GM12878 (cell line): ENCODE measurements at regions of chr6 and their contacts with region 1.

Region 1: GRCh38 chr6:38068854-38069590 is 249.5 kb downstream of the ZFAND3 start:
- DNase-seq: no peak
- ATAC-seq: no peak
- H3K4me3 ChIP-seq: no peak overlapping the region
- H3K27ac ChIP-seq: no peak overlapping the region
- H3K4me1 ChIP-seq: peaks cover 3% of the 10 kb centered on the region; the same call in 1 of the 2 replicates
- H3K27me3 ChIP-seq: no peaks in the 10 kb centered on the region
- CTCF ChIP-seq: no peak
- EP300 ChIP-seq: no peak
- POLR2A ChIP-seq: no peak
- RAD21 ChIP-seq: no peak

Region 2: DNA sequence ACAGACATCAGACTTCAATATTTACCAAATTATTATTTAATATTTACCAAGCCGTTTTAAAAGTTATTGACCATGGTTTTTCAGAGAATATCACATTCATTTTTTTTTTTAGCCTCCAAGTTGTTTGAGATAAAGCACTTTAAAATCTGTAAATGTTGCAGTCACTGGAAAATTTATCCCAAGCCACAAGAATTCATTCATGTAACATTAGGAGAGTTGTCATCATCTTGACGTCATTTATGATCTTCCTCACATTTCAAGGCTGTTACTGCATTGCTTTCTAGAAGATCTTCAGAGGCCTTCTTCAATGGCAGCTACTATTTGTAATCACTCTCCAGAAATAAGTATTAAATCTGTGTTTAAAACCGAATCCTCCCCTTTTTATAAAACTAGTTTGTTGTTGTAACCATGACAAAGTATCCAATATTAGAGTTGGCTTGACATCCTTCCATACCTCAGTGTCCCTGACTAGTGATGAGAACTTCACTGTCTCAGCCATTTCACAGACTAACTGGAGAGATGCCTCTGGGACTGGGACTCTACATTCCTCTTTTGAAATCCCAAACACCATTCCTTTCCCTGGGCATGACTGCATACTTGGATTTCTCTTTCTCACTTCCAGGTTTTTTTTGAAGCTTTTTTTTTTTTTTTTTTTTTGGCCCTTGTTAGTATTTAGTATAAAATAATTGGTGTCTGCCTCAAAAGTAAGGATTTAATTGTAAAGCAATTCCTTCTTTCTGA is 149.4 kb before region 1 on chr6:
- CTCF ChIA-PET with region 1: no interaction called
- POLR2A ChIA-PET with region 1: no interaction called
- RAD21 ChIA-PET with region 1: no interaction called
- SMC1A ChIA-PET with region 1: no interaction called
- in situ Hi-C with region 1: no loop called
- intact Hi-C with region 1: no loop called
- DNase-seq: no peak
- ATAC-seq: no peak
- H3K4me3 ChIP-seq: no peak overlapping the region
- H3K27ac ChIP-seq: no peak overlapping the region
- H3K4me1 ChIP-seq: 0 out of 2 replicates have a peak, but pooled peaks cover 9% of the 10 kb centered on the region
- H3K27me3 ChIP-seq: no peaks in the 10 kb centered on the region
- CTCF ChIP-seq: no peak
- EP300 ChIP-seq: no peak
- POLR2A ChIP-seq: no peak
- RAD21 ChIP-seq: no peak

Region 3: DNA sequence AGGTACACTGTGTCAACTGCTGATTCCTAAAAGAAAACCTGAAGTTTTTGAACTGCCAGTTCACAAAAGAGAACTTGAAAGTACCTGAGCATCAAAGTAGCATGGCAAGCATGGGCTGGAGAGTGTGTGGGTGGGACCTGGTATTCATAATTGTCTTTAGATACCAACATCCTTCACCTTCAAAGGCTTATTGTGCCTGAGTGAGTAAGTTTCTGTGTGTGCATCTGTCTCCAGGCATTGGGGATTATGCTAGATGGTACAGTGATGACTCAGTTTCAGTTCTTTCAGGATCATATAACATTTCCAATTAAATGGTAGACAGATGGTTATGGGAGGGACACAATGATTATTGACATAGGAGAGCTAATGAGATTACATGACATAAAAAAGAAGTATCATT is 11.0 kb before region 1 on chr6:
- CTCF ChIA-PET with region 1: interaction called, 4 read pairs
- POLR2A ChIA-PET with region 1: no interaction called
- RAD21 ChIA-PET with region 1: interaction called, 3 read pairs
- SMC1A ChIA-PET with region 1: interaction called, 10 read pairs
- in situ Hi-C with region 1: no loop called
- intact Hi-C with region 1: no loop called
- DNase-seq: peak; percentile 20
- ATAC-seq: peak; percentile 94
- H3K4me3 ChIP-seq: no peak overlapping the region
- H3K27ac ChIP-seq: no peak overlapping the region
- H3K4me1 ChIP-seq: peaks cover 12% of the 10 kb centered on the region
- H3K27me3 ChIP-seq: no peaks in the 10 kb centered on the region
- CTCF ChIP-seq: no peak
- EP300 ChIP-seq: no peak
- POLR2A ChIP-seq: no peak
- RAD21 ChIP-seq: no peak

Region 4: GRCh38 chr6:38143191-38144150 is 74.4 kb after region 1 on chr6:
- CTCF ChIA-PET with region 1: no interaction called
- POLR2A ChIA-PET with region 1: no interaction called
- RAD21 ChIA-PET with region 1: no interaction called
- SMC1A ChIA-PET with region 1: no interaction called
- in situ Hi-C with region 1: no loop called
- intact Hi-C with region 1: no loop called
- DNase-seq: no peak
- ATAC-seq: no peak
- H3K4me3 ChIP-seq: no peak overlapping the region
- H3K27ac ChIP-seq: no peak overlapping the region
- H3K4me1 ChIP-seq: 0 out of 2 replicates have a peak, but pooled peaks cover 4% of the 10 kb centered on the region
- H3K27me3 ChIP-seq: no peaks in the 10 kb centered on the region
- CTCF ChIP-seq: no peak
- EP300 ChIP-seq: no peak
- POLR2A ChIP-seq: no peak
- RAD21 ChIP-seq: no peak

Region 5: DNA sequence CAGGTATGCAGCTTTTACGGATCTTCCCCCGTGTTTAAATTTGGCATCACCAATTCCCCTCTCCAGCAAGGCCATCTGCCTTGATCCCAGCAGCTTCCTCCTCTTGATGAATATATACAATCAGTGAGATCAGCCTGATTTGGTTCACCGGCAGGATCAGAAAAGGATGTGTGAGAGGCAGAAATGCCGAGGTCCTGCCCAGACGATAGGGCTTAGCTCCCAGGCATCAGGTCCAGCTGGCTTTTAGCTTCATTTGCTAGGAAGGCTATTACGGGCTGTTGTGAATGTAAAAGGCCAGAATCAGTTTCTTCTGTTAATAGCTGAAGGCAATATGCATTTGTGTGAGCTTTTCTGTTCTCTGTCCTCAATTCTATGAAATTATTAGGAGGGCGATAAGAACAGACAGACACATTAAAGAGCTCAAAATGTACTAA is 197.9 kb after region 1 on chr6:
- CTCF ChIA-PET with region 1: no interaction called
- POLR2A ChIA-PET with region 1: no interaction called
- RAD21 ChIA-PET with region 1: no interaction called
- SMC1A ChIA-PET with region 1: no interaction called
- in situ Hi-C with region 1: no loop called
- intact Hi-C with region 1: no loop called
- DNase-seq: no peak
- ATAC-seq: no peak
- H3K4me3 ChIP-seq: no peak overlapping the region
- H3K27ac ChIP-seq: no peak overlapping the region
- H3K4me1 ChIP-seq: peaks cover 9% of the 10 kb centered on the region
- H3K27me3 ChIP-seq: no peaks in the 10 kb centered on the region
- CTCF ChIP-seq: no peak
- EP300 ChIP-seq: no peak
- POLR2A ChIP-seq: no peak
- RAD21 ChIP-seq: no peak

Region 6: GRCh38 chr6:38290133-38290799 is 221.2 kb after region 1 on chr6:
- CTCF ChIA-PET with region 1: no interaction called
- POLR2A ChIA-PET with region 1: no interaction called
- RAD21 ChIA-PET with region 1: no interaction called
- SMC1A ChIA-PET with region 1: no interaction called
- in situ Hi-C with region 1: no loop called
- intact Hi-C with region 1: no loop called
- DNase-seq: no peak
- ATAC-seq: no peak
- H3K4me3 ChIP-seq: no peak overlapping the region
- H3K27ac ChIP-seq: no peak overlapping the region
- H3K4me1 ChIP-seq: no peaks in the 10 kb centered on the region
- H3K27me3 ChIP-seq: no peaks in the 10 kb centered on the region
- CTCF ChIP-seq: no peak
- EP300 ChIP-seq: no peak
- POLR2A ChIP-seq: no peak
- RAD21 ChIP-seq: no peak